ENCODE measurements at regions of chr1 and their contacts with region 1.

Region 1: GRCh38 chr1:149887456-149888247 is 11.7 kb upstream of the BOLA1 start:
- DNase-seq: peak; percentile 94
- H3K4me3 Mint-ChIP-seq: no peak overlapping the region
- H3K27ac Mint-ChIP-seq: no peak overlapping the region
- H3K4me1 Mint-ChIP-seq: peaks cover 12% of the 10 kb centered on the region
- H3K27me3 Mint-ChIP-seq: peaks cover 2% of the 10 kb centered on the region

Region 2: DNA sequence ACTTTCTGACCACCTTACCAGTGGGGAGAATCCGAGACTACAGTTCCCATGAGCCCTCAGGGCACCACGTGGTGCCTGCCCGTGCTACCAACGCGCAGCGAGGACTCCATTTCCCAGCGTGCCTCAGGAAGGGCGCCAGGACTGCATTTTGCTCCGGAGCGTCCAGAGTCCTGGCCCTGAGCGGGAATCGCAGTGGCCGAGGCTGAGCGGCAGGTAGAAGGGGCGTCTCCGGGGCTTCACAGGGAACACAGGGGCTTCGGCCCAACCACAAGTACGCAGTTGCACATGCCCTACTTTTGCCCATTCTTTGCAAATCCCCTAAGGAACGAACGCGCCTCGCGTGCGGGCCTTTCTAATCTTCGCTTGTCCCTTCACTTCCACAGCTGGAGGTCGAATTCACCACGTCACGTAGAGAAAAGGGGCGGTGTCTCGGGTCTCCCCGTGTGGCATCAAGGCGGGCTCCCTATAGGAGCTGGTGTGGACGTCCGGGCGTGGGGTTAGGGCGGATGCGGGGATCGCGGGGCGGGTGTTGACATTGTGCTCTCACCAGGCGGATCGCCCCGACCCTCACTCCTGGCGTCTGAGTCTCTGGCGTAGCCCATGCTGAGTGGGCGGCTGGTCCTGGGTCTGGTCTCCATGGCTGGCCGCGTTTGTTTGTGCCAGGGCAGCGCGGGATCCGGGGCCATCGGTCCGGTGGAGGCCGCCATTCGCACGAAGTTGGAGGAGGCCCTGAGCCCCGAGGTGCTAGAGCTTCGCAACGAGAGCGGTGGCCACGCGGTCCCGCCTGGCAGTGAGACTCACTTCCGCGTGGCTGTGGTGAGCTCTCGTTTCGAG is 12.0 kb after region 1 on chr1 and contains the start of gene BOLA1:
- intact Hi-C with region 1: loop called (anchors 1 kb)
- DNase-seq: peak; percentile 95
- H3K4me3 Mint-ChIP-seq: peak within 1 kb of the TSS; percentile 87
- H3K27ac Mint-ChIP-seq: peak within 1 kb of the TSS; percentile 94
- H3K4me1 Mint-ChIP-seq: peaks cover 21% of the 10 kb centered on the region
- H3K27me3 Mint-ChIP-seq: no peaks in the 10 kb centered on the region
- total RNA-seq, gene BOLA1: 25.8 and 26.6 TPM in 2 replicates

Region 3: DNA sequence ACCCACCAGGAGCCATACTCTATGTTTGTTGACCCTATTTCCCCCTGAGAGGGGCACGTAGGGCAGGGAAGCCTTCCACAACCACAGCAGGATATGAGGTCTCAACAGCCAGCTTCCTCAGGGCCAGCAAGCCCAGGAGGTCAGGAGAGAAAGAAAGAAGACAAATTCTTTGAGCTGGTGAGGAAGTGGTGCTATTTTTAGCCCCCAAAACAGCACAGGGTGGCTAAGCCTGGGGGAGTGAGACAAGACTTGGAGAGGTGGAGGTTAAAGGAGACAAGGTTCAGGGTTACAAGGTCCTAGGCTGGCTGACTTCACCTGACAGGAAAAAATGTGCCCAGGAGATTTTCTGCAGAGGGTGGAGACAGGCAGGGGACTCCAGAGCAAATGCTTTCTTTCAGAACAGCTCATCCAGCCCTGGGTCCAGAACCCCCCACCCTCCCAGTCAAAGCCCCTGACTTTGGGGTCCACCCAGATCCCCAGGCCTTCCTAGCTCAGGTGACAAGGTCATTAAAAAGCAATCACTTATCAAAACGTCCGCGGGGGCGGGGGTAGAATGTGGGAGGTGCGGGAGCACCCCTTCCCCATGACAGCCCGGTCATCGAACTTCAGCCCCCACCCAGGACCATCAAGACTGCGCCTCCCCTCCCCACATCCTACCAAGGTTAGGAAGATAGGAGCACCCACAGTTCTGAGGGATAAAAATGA is 28.7 kb after region 1 on chr1:
- intact Hi-C with region 1: no loop called
- DNase-seq: peak; percentile 62
- H3K4me3 Mint-ChIP-seq: peak overlapping the region; percentile 92
- H3K27ac Mint-ChIP-seq: peak overlapping the region; percentile 84
- H3K4me1 Mint-ChIP-seq: peaks cover 47% of the 10 kb centered on the region
- H3K27me3 Mint-ChIP-seq: no peaks in the 10 kb centered on the region

Region 4: DNA sequence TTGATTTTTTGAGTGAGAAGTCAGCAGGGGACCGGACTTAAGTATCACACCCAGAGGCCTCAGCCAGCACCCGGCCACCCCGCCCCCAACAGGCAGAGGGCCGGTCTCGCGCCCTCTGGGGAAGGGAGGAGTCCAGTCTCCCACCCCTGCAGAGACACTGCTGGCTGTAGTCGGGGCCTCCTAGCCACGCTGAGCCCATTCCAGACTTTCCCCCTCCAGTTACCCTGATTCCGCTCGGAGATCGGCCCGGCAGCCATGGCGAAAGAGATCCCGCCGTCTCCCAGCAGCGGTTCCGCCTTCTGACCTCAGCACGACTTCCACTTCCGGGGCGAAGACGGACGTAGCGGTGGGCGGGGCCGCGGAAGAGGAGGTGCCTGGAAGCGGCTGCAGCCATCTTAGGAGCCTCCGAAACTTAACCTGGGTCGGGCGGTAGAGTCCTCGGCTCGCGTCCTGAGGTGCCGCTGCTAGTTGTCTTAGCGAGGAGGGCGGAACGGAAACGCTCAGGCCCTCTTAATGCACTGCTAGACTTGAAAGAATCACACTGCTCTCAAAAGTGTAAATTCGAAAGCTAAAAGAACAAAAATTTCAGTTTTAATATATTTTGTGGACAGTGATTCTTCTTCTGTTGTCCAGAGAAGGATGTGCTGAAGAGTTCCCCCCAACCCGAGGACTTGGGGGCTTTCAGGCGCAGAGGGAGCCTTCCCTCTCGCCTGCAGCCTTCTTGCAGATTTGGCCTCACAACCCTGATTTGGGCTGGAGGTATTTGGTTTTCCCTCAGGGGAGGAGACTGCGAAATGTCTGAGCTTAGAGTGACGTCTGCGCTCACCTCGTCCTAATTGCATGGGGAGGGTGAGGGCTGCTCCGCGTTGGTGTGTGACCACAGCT is 40.1 kb after region 1 on chr1 and contains the start of gene SF3B4:
- intact Hi-C with region 1: loop called (anchors 1 kb)
- DNase-seq: peak; percentile 99
- H3K4me3 Mint-ChIP-seq: peak within 1 kb of the TSS; percentile 97
- H3K27ac Mint-ChIP-seq: peak within 1 kb of the TSS; percentile 94
- H3K4me1 Mint-ChIP-seq: peaks cover 62% of the 10 kb centered on the region
- H3K27me3 Mint-ChIP-seq: no peaks in the 10 kb centered on the region
- total RNA-seq, gene SF3B4: 124 and 131 TPM in 2 replicates

Region 5: GRCh38 chr1:149937060-149937705 is 49.5 kb after region 1 on chr1:
- intact Hi-C with region 1: loop called (anchors 2 kb)
- DNase-seq: no peak
- H3K4me3 Mint-ChIP-seq: peak overlapping the region; percentile 64
- H3K27ac Mint-ChIP-seq: peak overlapping the region; percentile 72
- H3K4me1 Mint-ChIP-seq: peaks cover 33% of the 10 kb centered on the region
- H3K27me3 Mint-ChIP-seq: no peaks in the 10 kb centered on the region

Region 6: GRCh38 chr1:150009665-150010392 is 122.2 kb after region 1 on chr1:
- intact Hi-C with region 1: loop called (anchors 1 kb)
- DNase-seq: peak; percentile 81
- H3K4me3 Mint-ChIP-seq: peak overlapping the region; percentile 95
- H3K27ac Mint-ChIP-seq: peak overlapping the region; percentile 98
- H3K4me1 Mint-ChIP-seq: peaks cover 39% of the 10 kb centered on the region
- H3K27me3 Mint-ChIP-seq: peaks cover 1% of the 10 kb centered on the region

Region 7: GRCh38 chr1:150049926-150050325 is 162.3 kb after region 1 on chr1:
- intact Hi-C with region 1: loop called (anchors 1 kb)
- DNase-seq: no peak
- H3K4me3 Mint-ChIP-seq: no peak overlapping the region
- H3K27ac Mint-ChIP-seq: no peak overlapping the region
- H3K4me1 Mint-ChIP-seq: peaks cover 3% of the 10 kb centered on the region
- H3K27me3 Mint-ChIP-seq: peaks cover 17% of the 10 kb centered on the region

Region 8: GRCh38 chr1:150067184-150068036 is 179.8 kb after region 1 on chr1 and contains the start of gene VPS45:
- intact Hi-C with region 1: loop called (anchors 1 kb)
- DNase-seq: peak; percentile 95
- H3K4me3 Mint-ChIP-seq: peak within 1 kb of the TSS; percentile 96
- H3K27ac Mint-ChIP-seq: peak within 1 kb of the TSS; percentile 98
- H3K4me1 Mint-ChIP-seq: peaks cover 24% of the 10 kb centered on the region
- H3K27me3 Mint-ChIP-seq: peaks cover 1% of the 10 kb centered on the region
- total RNA-seq, gene VPS45: 20.8 and 21.0 TPM in 2 replicates